Body of pancreas (tissue), 4 donors: ENCODE measurements at regions of chr1 and their contacts with region 1.

Region 1: DNA sequence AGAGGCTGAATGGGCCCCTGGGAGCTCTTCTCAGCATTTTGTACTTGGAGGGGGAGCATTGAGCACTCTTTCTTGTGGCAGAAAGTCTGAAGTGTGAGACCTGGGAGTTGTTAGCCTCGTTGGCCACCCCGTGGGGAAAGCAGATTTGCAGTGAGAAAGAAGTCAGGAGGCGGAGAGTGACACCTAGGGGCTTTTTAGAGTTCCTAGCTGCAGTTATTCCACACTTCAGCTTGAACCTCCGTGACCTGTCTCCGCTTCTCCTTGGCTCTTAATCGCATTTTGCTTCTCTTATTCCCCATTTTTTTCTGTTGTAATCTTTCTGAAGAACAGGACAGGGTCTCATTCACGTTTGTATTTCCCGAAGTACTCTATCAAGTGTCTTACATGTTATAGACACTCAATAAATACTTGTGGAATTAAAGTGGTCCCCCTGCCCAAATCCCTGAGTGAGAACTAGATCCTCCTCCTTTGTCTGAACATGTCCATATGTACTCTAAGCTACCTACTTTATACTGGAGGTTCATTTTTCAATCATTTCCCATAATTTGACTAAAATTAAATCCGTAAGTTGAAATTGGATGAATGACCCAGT is 14.5 kb upstream of the C1orf141 start:
- DNase-seq: peak; percentile 77 to 85 (median 79)
- ATAC-seq: peak; percentile 94
- H3K4me3 ChIP-seq: no peak overlapping the region
- H3K27ac ChIP-seq: no peak overlapping the region
- H3K4me1 ChIP-seq: peaks cover 10% of the 10 kb centered on the region
- H3K27me3 ChIP-seq: no peaks in the 10 kb centered on the region
- CTCF ChIP-seq: peak; percentile 65 to 99 (median 97)
- POLR2A ChIP-seq: no peak

Region 2: DNA sequence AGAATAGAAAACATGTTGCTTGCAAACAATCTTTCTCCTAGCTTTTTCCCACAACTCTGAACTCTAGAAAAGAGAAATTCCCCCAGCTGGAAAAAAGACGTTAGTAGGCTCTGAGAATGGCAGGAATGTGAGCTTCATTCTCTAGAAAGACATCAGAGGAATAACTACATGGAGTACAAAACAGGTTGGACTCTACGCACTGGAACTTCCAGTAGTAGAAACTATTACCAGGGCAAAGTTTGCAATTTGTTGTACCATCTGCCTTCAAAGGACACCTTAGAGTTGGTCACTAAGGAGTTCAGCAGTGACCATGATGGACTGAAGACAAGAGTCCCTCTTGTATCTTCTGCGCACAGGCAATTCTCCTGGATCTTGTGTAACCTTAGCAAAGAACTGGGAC is 156.2 kb before region 1 on chr1:
- intact Hi-C with region 1: loop called (anchors 5 kb)
- DNase-seq: no peak
- ATAC-seq: no peak
- H3K4me3 ChIP-seq: no peak overlapping the region
- H3K27ac ChIP-seq: no peak overlapping the region
- H3K4me1 ChIP-seq: no peaks in the 10 kb centered on the region
- H3K27me3 ChIP-seq: no peaks in the 10 kb centered on the region
- CTCF ChIP-seq: no peak
- POLR2A ChIP-seq: no peak